Common myeloid progenitor, CD34-positive (primary cell): ENCODE measurements at regions of chr17 and their contacts with region 1.

Region 1: DNA sequence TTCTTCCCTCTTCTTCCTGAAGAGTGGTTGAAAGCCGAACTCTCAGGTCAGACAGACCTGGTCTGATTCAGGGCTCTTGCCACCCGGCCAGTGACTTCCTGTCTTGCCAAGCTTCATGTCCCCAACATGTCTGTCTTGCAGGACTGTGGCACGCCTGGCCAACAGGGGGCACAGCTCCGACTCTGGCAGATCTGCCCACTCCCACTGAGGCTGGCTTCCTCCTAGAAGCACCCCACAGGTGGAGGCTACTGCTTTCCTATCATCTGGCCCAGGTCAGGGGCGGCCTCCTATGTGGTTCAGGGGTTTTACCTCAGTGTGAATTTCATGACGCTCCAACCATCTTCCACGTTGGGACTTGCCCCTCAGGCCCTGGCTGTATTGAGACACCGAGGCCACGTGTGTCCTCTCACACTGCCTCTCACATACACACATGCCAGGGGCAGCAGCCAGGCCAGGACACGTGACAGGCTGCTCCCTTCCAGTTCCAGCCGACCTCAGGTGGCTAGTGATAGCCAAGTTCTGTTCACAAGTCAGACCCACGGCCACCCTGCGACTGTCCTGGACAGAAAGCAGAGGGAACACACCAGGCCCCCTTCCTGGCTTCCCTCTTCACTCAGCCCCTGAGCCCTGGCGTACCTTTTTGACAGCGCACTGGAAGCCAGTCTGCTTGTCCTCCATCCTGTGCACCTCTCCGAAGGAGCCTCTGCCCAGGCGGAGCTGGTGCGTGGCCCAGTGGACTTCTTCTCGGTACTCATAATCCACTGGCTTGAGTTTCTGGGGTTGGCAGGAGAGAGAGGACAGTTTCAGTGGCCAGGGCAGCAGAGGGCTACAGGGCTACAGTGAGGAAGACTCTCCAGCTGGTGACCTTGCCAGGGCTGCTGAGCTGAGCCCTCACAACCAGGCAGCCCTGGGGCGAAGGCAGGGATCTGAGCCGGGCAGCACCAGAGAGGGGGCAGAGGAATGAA is 22.6 kb upstream of the SPATA32 start:
- DNase-seq: peak; percentile 31 to 42 (median 38)
- H3K4me3 ChIP-seq: no peak overlapping the region
- H3K27ac ChIP-seq: no peak overlapping the region
- H3K4me1 ChIP-seq: peaks cover 0 to 8% (median 3%) of the 10 kb centered on the region in 4 experiments
- H3K27me3 ChIP-seq: no peaks in the 10 kb centered on the region

Region 2: GRCh38 chr17:45225051-45225700 is 59.3 kb before region 1 on chr17:
- CTCF ChIA-PET with region 1: no interaction called
- POLR2A ChIA-PET with region 1: no interaction called
- DNase-seq: peak in 2 of 3 donors; percentile 56 to 62
- H3K4me3 ChIP-seq: peak overlapping the region; percentile 9 to 95 (median 91)
- H3K27ac ChIP-seq: peak overlapping the region; percentile 95 to 96
- H3K4me1 ChIP-seq: peaks cover 27 to 90% (median 87%) of the 10 kb centered on the region in 4 experiments
- H3K27me3 ChIP-seq: no peaks in the 10 kb centered on the region

Region 3: GRCh38 chr17:45307290-45308015 is 23.0 kb after region 1 on chr17:
- CTCF ChIA-PET with region 1: interaction called, 10 read pairs
- POLR2A ChIA-PET with region 1: interaction called, 3 read pairs
- DNase-seq: peak; percentile 78 to 93 (median 87)
- H3K4me3 ChIP-seq: peak overlapping the region in 5 of 7 experiments; percentile 23 to 53 (median 38)
- H3K27ac ChIP-seq: peak overlapping the region; percentile 76 to 89
- H3K4me1 ChIP-seq: peaks cover 34 to 66% (median 56%) of the 10 kb centered on the region in 4 experiments
- H3K27me3 ChIP-seq: no peaks in the 10 kb centered on the region

Region 4: GRCh38 chr17:45317112-45317928 is 32.9 kb after region 1 on chr17:
- CTCF ChIA-PET with region 1: interaction called, 10 read pairs
- POLR2A ChIA-PET with region 1: no interaction called
- DNase-seq: peak; percentile 100
- H3K4me3 ChIP-seq: peak overlapping the region; percentile 40 to 88 (median 83)
- H3K27ac ChIP-seq: peak overlapping the region; percentile 17 to 84
- H3K4me1 ChIP-seq: peaks cover 39 to 70% (median 67%) of the 10 kb centered on the region in 4 experiments
- H3K27me3 ChIP-seq: no peaks in the 10 kb centered on the region